ENCODE measurements at regions of chr6 and their contacts with region 1.

Region 1: GRCh38 chr6:72627539-72627938 is 5.7 kb downstream of the KCNQ5 start:
- DNase-seq: no peak
- ATAC-seq: no peak
- H3K4me3 ChIP-seq: no peak overlapping the region
- H3K4me3 Mint-ChIP-seq: no peak overlapping the region
- H3K27ac ChIP-seq: no peak overlapping the region
- H3K27ac Mint-ChIP-seq: no peak overlapping the region
- H3K4me1 ChIP-seq: peaks cover 9% of the 10 kb centered on the region
- H3K4me1 Mint-ChIP-seq: peaks cover 25% of the 10 kb centered on the region
- H3K27me3 ChIP-seq: no peaks in the 10 kb centered on the region
- H3K27me3 Mint-ChIP-seq: no peaks in the 10 kb centered on the region
- CTCF ChIP-seq: no peak

Region 2: GRCh38 chr6:72580281-72580940 is 47.1 kb before region 1 on chr6:
- CTCF ChIA-PET with region 1: no interaction called
- POLR2A ChIA-PET with region 1: no interaction called
- intact Hi-C with region 1: no loop called
- DNase-seq: peak in 2 of 9 experiments; percentile 13 to 25
- ATAC-seq: no peak
- H3K4me3 ChIP-seq: no peak overlapping the region
- H3K4me3 Mint-ChIP-seq: no peak overlapping the region
- H3K27ac ChIP-seq: no peak overlapping the region
- H3K27ac Mint-ChIP-seq: no peak overlapping the region
- H3K4me1 ChIP-seq: no peaks in the 10 kb centered on the region
- H3K4me1 Mint-ChIP-seq: no peaks in the 10 kb centered on the region
- H3K27me3 ChIP-seq: no peaks in the 10 kb centered on the region
- H3K27me3 Mint-ChIP-seq: no peaks in the 10 kb centered on the region
- CTCF ChIP-seq: no peak

Region 3: GRCh38 chr6:72616406-72617015 is 11.0 kb before region 1 on chr6:
- CTCF ChIA-PET with region 1: interaction called, 15 read pairs
- POLR2A ChIA-PET with region 1: no interaction called
- intact Hi-C with region 1: no loop called
- DNase-seq: peak in 2 of 9 experiments; percentile 50 to 67
- ATAC-seq: no peak
- H3K4me3 ChIP-seq: no peak overlapping the region
- H3K4me3 Mint-ChIP-seq: no peak overlapping the region
- H3K27ac ChIP-seq: no peak overlapping the region
- H3K27ac Mint-ChIP-seq: peak overlapping the region; percentile 68
- H3K4me1 ChIP-seq: peaks cover 19% of the 10 kb centered on the region
- H3K4me1 Mint-ChIP-seq: peaks cover 51% of the 10 kb centered on the region
- H3K27me3 ChIP-seq: no peaks in the 10 kb centered on the region
- H3K27me3 Mint-ChIP-seq: no peaks in the 10 kb centered on the region
- CTCF ChIP-seq: peak; percentile 71